ENCODE measurements at regions of chr6 and their contacts with region 1.

Region 1: GRCh38 chr6:29953001-29953441 is 10.7 kb downstream of the HLA-A start:
- DNase-seq: peak; percentile 68
- H3K4me3 ChIP-seq: no peak overlapping the region
- H3K27ac ChIP-seq: no peak overlapping the region
- H3K4me1 ChIP-seq: no peaks in the 10 kb centered on the region
- H3K27me3 ChIP-seq: no peaks in the 10 kb centered on the region
- CTCF ChIP-seq: no peak
- POLR2A ChIP-seq: no peak

Region 2: DNA sequence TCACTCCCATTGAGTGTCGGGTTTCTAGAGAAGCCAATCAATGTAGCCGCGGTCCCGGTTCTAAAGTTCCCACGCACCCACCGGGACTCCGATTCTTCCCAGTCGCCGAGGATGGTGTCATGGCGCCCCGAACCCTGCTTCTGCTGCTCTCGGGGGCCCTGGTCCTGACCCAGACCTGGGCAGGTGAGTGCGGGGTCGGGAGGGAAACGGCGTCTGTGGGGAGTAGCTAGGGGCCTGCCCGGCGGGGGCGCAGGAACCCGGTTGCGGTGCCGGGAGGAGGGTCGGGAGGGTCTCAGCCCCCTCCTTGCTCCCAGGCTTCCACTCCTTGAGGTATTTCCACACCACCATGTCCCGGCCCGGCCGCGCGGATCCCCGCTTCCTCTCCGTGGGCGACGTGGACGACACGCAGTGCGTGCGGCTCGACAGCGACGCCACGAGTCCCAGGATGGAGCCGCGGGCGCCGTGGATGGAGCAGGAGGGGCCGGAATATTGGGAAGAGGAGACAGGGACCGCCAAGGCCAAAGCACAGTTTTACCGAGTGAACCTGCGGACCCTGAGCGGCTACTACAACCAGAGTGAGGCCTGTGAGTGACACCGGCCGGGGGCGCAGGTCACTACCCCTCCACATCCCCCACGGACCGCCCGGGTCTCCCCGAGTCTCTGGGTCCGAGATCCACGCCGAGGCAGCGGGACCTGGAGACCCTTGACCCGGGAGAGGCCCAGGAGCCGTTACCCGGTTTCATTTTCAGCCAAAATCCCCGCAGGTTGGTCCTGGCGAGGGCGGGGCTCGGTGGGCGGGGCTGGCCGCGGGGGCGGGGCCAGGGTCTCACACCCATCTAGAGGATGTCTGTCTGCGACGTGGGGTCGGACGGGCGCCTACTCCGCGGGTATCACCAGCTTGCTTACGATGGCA is 160.6 kb before region 1 on chr6:
- CTCF ChIA-PET with region 1: no interaction called
- POLR2A ChIA-PET with region 1: no interaction called
- dilution Hi-C with region 1: loop called (anchors 10 kb)
- intact Hi-C with region 1: no loop called
- DNase-seq: peak; percentile 9
- H3K4me3 ChIP-seq: peak overlapping the region in 2 of 3 experiments; percentile 7 to 51
- H3K27ac ChIP-seq: no peak overlapping the region
- H3K4me1 ChIP-seq: no peaks in the 10 kb centered on the region
- H3K27me3 ChIP-seq: peaks cover 31 to 62% of the 10 kb centered on the region in 2 experiments
- CTCF ChIP-seq: peak; percentile 44 to 73
- POLR2A ChIP-seq: no peak

Region 3: DNA sequence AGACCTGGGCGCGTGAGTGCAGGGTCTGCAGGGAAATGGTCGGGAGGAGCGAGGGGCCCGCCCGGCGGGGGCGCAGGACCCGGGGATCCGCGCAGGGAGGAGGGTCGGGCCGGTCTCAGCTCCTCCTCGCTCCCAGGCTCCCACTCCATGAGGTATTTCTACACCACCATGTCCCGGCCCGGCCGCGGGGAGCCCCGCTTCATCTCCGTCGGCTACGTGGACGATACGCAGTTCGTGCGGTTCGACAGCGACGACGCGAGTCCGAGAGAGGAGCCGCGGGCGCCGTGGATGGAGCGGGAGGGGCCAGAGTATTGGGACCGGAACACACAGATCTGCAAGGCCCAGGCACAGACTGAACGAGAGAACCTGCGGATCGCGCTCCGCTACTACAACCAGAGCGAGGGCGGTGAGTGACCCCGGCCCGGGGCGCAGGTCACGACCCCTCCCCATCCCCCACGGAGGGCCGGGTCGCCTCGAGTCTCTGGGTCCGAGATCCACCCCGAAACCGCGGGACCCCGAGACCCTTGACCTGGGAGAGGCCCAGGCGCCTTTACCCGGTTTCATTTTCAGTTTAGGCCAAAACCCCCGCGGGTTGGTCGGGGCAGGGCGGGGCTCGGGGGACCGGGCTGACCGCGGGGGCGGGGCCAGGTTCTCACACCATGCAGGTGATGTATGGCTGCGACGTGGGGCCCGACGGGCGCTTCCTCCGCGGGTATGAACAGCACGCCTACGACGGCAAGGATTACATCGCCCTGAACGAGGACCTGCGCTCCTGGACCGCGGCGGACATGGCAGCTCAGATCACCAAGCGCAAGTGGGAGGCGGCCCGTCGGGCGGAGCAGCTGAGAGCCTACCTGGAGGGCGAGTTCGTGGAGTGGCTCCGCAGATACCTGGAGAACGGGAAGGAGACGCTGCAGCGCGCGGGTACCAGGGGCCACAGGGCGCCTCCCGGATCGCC is 64.9 kb before region 1 on chr6:
- CTCF ChIA-PET with region 1: no interaction called
- POLR2A ChIA-PET with region 1: no interaction called
- dilution Hi-C with region 1: no loop called
- intact Hi-C with region 1: loop called (anchors 2 kb)
- DNase-seq: peak; percentile 10
- H3K4me3 ChIP-seq: peak overlapping the region; percentile 43 to 53 (median 46)
- H3K27ac ChIP-seq: no peak overlapping the region
- H3K4me1 ChIP-seq: peaks cover 5% of the 10 kb centered on the region
- H3K27me3 ChIP-seq: peaks cover 19 to 23% of the 10 kb centered on the region in 2 experiments
- CTCF ChIP-seq: no peak
- POLR2A ChIP-seq: no peak

Measured in endothelial cell of umbilical vein (primary cell).